ENCODE measurements at regions of chr9 and their contacts with region 1.

Region 1: DNA sequence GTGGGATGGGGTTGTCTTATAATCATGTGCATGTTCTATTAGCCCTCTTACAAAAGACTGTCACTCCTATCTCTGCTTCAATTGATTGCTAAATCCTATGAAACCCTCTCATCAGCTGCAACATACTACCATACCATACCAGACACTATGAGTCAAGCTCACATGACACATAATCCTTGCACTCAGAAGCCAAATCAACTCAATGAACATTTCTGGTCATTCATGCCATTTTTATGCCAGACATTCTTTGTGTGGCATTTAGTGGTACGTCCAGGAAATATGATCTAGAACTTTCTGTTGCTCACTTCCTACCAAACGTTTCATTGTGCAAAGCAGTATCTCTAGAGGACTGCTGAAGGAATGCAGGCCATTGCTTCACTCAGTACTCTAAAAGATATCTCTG is 159.2 kb upstream of the GNA14 start:
- DNase-seq: peak; percentile 79
- H3K4me3 ChIP-seq: no peak overlapping the region
- H3K27ac ChIP-seq: peak overlapping the region; percentile 62
- H3K4me1 ChIP-seq: peaks cover 23% of the 10 kb centered on the region
- H3K27me3 ChIP-seq: no peaks in the 10 kb centered on the region
- CTCF ChIP-seq: no peak
- POLR2A ChIP-seq: no peak

Region 2: DNA sequence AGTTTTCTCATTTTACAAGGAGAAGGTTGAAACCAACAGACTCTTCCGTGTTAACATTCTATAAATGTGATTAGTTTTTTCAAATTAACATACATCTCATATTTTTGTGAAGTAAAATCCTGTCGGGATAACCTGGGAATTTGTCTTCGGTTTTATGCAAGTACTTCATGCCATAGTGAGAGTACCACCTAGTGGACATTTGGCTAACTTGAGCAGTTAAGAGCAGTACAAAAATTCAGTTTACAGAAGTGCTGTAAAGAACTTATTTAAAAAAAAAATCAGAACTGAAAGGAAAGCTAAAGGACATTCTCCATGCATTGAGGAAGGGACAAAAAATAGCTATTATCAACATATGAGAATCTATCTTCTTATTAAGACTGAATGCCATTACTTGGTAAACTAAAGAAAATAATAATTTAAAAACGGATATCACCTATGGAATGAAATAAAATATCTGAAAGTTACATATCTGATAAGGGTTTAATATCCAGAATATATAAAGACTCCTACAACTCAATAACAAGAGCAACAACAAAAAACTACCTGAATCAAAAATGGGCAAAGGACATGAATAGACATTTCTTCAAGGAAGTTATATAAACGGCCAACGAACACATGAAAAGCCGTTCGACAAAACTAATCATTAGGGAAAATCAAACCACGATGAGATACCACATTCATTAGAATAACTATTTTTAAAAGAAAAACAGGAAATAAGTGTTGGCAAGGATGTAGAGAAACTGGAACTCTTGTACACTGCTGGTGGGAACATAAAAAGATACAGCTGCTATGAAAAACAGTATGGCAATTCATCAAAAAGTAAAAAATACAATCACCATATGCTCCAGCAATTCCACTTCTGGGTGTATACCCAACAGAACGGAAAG is 42.1 kb before region 1 on chr9:
- CTCF ChIA-PET with region 1: no interaction called
- POLR2A ChIA-PET with region 1: no interaction called
- dilution Hi-C with region 1: no loop called
- intact Hi-C with region 1: loop called (anchors 1 kb)
- DNase-seq: peak; percentile 58
- H3K4me3 ChIP-seq: no peak overlapping the region
- H3K27ac ChIP-seq: peak overlapping the region; percentile 11
- H3K4me1 ChIP-seq: peaks cover 12% of the 10 kb centered on the region
- H3K27me3 ChIP-seq: no peaks in the 10 kb centered on the region
- CTCF ChIP-seq: peak; percentile 35 to 46
- POLR2A ChIP-seq: no peak